AG04449 (cell line): ENCODE measurements at regions of chr20 and their contacts with region 1.

Region 1: GRCh38 chr20:35303735-35304491 is 11.7 kb upstream of the FAM83C start:
- DNase-seq: no peak
- H3K4me3 ChIP-seq: no peak overlapping the region
- CTCF ChIP-seq: peak; percentile 94

Region 2: DNA sequence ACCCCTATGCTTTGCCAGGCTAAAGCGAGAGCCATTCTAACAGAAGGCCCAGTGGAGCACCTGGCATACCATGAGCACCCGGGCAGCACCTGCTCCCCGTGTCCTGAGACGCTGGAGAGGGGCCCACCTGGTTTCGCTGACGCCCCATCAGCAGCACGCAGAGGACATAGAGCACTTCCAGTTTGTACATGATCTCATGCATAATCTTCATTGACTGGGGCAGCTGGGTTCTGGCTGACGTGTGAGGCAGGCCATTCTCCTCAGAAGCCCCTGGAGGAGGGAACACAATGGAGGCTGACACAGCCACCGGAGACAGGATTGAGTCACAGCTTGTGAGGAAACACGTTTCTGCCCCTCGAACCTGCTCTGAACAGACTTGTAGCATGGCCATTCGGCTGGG is 282.9 kb before region 1 on chr20:
- CTCF ChIA-PET with region 1: no interaction called
- POLR2A ChIA-PET with region 1: no interaction called
- DNase-seq: no peak
- H3K4me3 ChIP-seq: no peak overlapping the region
- CTCF ChIP-seq: no peak

Region 3: GRCh38 chr20:35269055-35269781 is 34.7 kb before region 1 on chr20:
- CTCF ChIA-PET with region 1: interaction called, 12 read pairs
- POLR2A ChIA-PET with region 1: no interaction called
- DNase-seq: no peak
- H3K4me3 ChIP-seq: no peak overlapping the region
- CTCF ChIP-seq: peak; percentile 95

Region 4: GRCh38 chr20:35318502-35319157 is 14.7 kb after region 1 on chr20:
- CTCF ChIA-PET with region 1: interaction called, 148 read pairs
- POLR2A ChIA-PET with region 1: interaction called, 62 read pairs
- DNase-seq: no peak
- H3K4me3 ChIP-seq: no peak overlapping the region
- CTCF ChIP-seq: no peak

Region 5: GRCh38 chr20:35344354-35344837 is 40.5 kb after region 1 on chr20:
- CTCF ChIA-PET with region 1: interaction called, 25 read pairs
- POLR2A ChIA-PET with region 1: interaction called, 6 read pairs
- DNase-seq: peak; percentile 51
- H3K4me3 ChIP-seq: no peak overlapping the region
- CTCF ChIP-seq: no peak

Region 6: GRCh38 chr20:35395728-35396127 is 91.8 kb after region 1 on chr20:
- CTCF ChIA-PET with region 1: interaction called, 29 read pairs
- POLR2A ChIA-PET with region 1: interaction called, 4 read pairs
- DNase-seq: peak; percentile 64
- H3K4me3 ChIP-seq: no peak overlapping the region
- CTCF ChIP-seq: peak; percentile 38

Region 7: GRCh38 chr20:35447082-35447789 is 143.3 kb after region 1 on chr20:
- CTCF ChIA-PET with region 1: interaction called, 662 read pairs
- POLR2A ChIA-PET with region 1: interaction called, 11 read pairs
- DNase-seq: no peak
- H3K4me3 ChIP-seq: peak overlapping the region; percentile 23; the same call in 1 of the 2 replicates
- CTCF ChIP-seq: peak; percentile 91

Region 8: GRCh38 chr20:35511814-35512420 is 208.0 kb after region 1 on chr20:
- CTCF ChIA-PET with region 1: no interaction called
- POLR2A ChIA-PET with region 1: no interaction called
- DNase-seq: no peak
- H3K4me3 ChIP-seq: no peak overlapping the region
- CTCF ChIP-seq: peak; percentile 51

Region 9: GRCh38 chr20:36173451-36173933 is 869.6 kb after region 1 on chr20:
- CTCF ChIA-PET with region 1: no interaction called
- POLR2A ChIA-PET with region 1: no interaction called
- DNase-seq: no peak
- H3K4me3 ChIP-seq: no peak overlapping the region
- CTCF ChIP-seq: no peak